ENCODE measurements at regions of chr6 and their contacts with region 1.

Region 1: DNA sequence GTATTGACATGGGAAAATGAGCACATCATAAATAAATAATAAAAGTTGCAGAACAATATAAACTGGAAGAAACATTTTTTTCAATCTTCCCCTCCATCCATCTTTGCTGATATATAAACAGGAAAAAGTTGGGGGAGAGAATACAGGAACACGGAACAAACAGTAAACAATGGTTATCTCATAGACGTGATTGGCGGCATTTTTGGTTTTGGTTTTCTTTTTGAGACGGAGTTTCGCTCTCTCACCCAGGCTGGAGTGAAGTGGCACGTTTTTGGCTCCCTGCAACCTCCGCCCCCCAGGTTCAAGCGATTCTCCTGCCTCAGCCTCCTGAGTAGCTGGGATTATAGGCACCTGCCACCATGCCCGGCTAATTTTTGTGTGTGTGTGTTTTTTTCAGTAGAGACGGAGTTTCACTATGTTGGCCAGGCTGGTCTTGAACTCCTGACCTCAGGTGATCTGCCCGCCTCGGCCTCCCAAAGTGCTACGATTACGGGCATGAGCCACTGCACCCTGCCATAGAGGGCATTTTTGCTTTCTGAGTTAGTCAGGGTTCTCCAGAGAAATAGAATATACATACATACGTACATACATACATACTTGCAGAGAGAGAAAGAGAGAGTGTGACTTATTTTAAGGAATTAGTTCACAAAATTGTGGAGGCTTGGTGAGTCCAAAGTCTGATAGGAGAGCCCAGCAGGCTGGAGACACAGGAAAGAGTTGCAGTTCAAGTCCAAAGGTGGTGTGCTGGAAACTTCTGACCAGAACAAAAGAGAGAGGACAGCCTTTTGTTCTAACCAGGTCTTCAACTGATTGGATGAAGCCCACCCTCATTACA is 22.6 kb downstream of the GNL1 start:
- DNase-seq: no peak
- H3K4me3 Mint-ChIP-seq: no peak overlapping the region
- H3K27ac Mint-ChIP-seq: no peak overlapping the region
- H3K4me1 Mint-ChIP-seq: no peaks in the 10 kb centered on the region
- H3K27me3 Mint-ChIP-seq: no peaks in the 10 kb centered on the region
- CTCF ChIP-seq: no peak

Region 2: GRCh38 chr6:30075161-30075986 is 458.3 kb before region 1 on chr6 and contains the start of gene RNF39:
- CTCF ChIA-PET with region 1: no interaction called
- POLR2A ChIA-PET with region 1: no interaction called
- intact Hi-C with region 1: no loop called
- DNase-seq: no peak
- H3K4me3 Mint-ChIP-seq: peak within 1 kb of the TSS; percentile 84
- H3K27ac Mint-ChIP-seq: peak within 1 kb of the TSS; percentile 85
- H3K4me1 Mint-ChIP-seq: peaks cover 39% of the 10 kb centered on the region
- H3K27me3 Mint-ChIP-seq: no peaks in the 10 kb centered on the region
- CTCF ChIP-seq: peak; percentile 57
- total RNA-seq, gene RNF39: 2.3 and 3.6 TPM in 2 replicates

Region 3: DNA sequence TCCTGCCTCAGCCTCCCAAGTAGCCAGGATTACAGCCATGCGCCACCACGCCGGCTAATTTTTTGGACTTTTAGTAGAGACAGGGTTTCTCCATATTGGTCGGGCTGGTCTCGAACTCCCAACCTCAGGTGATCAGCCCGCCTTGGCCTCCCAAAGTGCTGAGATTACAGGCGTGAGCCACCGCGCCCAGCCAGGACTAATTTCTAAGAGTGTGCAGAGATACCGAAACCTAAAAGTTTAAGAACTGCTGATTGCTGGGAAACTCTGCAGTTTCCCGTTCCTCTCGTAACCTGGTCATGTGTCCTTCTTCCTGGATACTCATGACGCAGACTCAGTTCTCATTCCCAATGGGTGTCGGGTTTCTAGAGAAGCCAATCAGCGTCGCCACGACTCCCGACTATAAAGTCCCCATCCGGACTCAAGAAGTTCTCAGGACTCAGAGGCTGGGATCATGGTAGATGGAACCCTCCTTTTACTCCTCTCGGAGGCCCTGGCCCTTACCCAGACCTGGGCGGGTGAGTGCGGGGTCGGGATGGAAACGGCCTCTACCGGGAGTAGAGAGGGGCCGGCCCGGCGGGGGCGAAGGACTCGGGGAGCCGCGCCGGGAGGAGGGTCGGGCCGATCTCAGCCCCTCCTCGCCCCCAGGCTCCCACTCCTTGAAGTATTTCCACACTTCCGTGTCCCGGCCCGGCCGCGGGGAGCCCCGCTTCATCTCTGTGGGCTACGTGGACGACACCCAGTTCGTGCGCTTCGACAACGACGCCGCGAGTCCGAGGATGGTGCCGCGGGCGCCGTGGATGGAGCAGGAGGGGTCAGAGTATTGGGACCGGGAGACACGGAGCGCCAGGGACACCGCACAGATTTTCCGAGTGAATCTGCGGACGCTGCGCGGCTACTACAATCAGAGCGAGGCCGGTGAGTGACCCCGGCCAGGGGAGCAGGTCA is 44.3 kb before region 1 on chr6 and contains the start of gene HLA-E:
- CTCF ChIA-PET with region 1: interaction called, 115 read pairs
- POLR2A ChIA-PET with region 1: interaction called, 7 read pairs
- intact Hi-C with region 1: loop called (anchors 1 kb)
- DNase-seq: peak; percentile 100
- H3K4me3 Mint-ChIP-seq: peak within 1 kb of the TSS; percentile 88
- H3K27ac Mint-ChIP-seq: peak within 1 kb of the TSS; percentile 97
- H3K4me1 Mint-ChIP-seq: peaks cover 4% of the 10 kb centered on the region
- H3K27me3 Mint-ChIP-seq: no peaks in the 10 kb centered on the region
- CTCF ChIP-seq: no peak
- total RNA-seq, gene HLA-E: 83.6 and 103 TPM in 2 replicates

Region 4: GRCh38 chr6:30497714-30498113 is 36.0 kb before region 1 on chr6:
- CTCF ChIA-PET with region 1: interaction called, 10 read pairs
- POLR2A ChIA-PET with region 1: interaction called, 5 read pairs
- intact Hi-C with region 1: loop called (anchors 1 kb)
- DNase-seq: no peak
- H3K4me3 Mint-ChIP-seq: no peak overlapping the region
- H3K27ac Mint-ChIP-seq: no peak overlapping the region
- H3K4me1 Mint-ChIP-seq: peaks cover 8% of the 10 kb centered on the region
- H3K27me3 Mint-ChIP-seq: no peaks in the 10 kb centered on the region
- CTCF ChIP-seq: no peak

Region 5: GRCh38 chr6:30515932-30516753 is 17.5 kb before region 1 on chr6:
- CTCF ChIA-PET with region 1: interaction called, 26 read pairs
- POLR2A ChIA-PET with region 1: interaction called, 19 read pairs
- intact Hi-C with region 1: no loop called
- DNase-seq: peak; percentile 95
- H3K4me3 Mint-ChIP-seq: peak overlapping the region; percentile 75
- H3K27ac Mint-ChIP-seq: peak overlapping the region; percentile 98
- H3K4me1 Mint-ChIP-seq: peaks cover 5% of the 10 kb centered on the region
- H3K27me3 Mint-ChIP-seq: no peaks in the 10 kb centered on the region
- CTCF ChIP-seq: no peak

Region 6: GRCh38 chr6:30556066-30556905 is 22.6 kb after region 1 on chr6 and contains the start of gene GNL1:
- CTCF ChIA-PET with region 1: interaction called, 10 read pairs
- POLR2A ChIA-PET with region 1: interaction called, 5 read pairs
- intact Hi-C with region 1: no loop called
- DNase-seq: peak; percentile 94
- H3K4me3 Mint-ChIP-seq: peak within 1 kb of the TSS; percentile 91
- H3K27ac Mint-ChIP-seq: peak within 1 kb of the TSS; percentile 99
- H3K4me1 Mint-ChIP-seq: peaks cover 16% of the 10 kb centered on the region
- H3K27me3 Mint-ChIP-seq: no peaks in the 10 kb centered on the region
- CTCF ChIP-seq: no peak
- total RNA-seq, gene GNL1: 69.1 and 76.8 TPM in 2 replicates